ENCODE measurements at regions of chr10 and their contacts with region 1.

Region 1: DNA sequence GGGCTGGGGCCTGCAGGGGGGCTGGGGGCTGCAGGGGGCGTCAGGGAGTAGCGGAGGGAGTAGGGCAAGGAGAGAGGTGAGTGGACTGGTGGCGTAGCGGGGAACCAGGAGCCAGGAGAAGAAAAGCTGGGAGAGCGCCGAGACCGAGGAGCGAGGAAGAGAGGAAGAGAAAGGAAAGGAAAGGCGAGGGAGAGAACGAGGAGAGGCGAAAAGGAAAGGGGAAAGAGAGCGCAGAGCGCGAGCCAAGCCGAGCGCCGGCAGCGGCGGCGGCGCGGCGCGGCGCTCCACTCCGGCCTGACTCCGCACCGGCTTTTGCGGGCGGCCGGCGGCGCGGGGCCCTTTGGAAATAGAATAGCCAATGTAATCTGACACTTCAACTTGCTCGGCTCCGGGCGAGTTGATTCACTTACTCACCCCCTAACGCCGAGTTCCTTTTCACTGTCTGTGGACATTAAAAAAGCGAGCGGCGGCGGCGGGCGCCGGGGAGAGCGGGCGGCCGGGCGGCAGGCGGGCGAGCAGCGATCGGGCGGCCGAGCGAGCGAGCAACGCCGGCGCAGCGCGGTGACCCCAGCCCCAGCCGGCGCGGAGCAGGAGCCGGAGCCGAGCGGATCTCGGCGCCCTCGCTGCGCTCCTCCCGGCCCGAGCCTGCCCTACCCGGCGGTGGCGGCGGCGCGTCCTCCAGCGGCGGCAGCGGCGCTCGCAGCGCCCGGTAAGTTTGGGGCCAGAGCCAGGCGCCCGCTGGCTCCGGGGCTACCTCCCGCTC is at the start of gene ZMIZ1:
- DNase-seq: peak; percentile 97
- total RNA-seq, gene ZMIZ1: 61.5 to 62.6 TPM

Region 2: GRCh38 chr10:78203915-78204818 is 864.6 kb before region 1 on chr10:
- intact Hi-C with region 1: loop called in 1 of 2 experiments (anchors 10 kb)
- DNase-seq: no peak

Region 3: GRCh38 chr10:78972947-78973900 is 95.5 kb before region 1 on chr10:
- intact Hi-C with region 1: loop called (anchors 5 kb)
- DNase-seq: peak; percentile 92